Endothelial cell of umbilical vein (primary cell): ENCODE measurements at regions of chr13 and their contacts with region 1.

Region 1: GRCh38 chr13:34044660-34045080 is 226.7 kb downstream of the RFC3 start:
- DNase-seq: peak; percentile 64
- H3K4me3 ChIP-seq: no peak overlapping the region
- H3K27ac ChIP-seq: peak overlapping the region; percentile 41
- H3K4me1 ChIP-seq: peaks cover 12% of the 10 kb centered on the region
- H3K27me3 ChIP-seq: no peaks in the 10 kb centered on the region
- CTCF ChIP-seq: no peak
- POLR2A ChIP-seq: no peak

Region 2: GRCh38 chr13:34257966-34258365 is 213.3 kb after region 1 on chr13:
- CTCF ChIA-PET with region 1: no interaction called
- POLR2A ChIA-PET with region 1: interaction called, 13 read pairs
- dilution Hi-C with region 1: no loop called
- intact Hi-C with region 1: no loop called
- DNase-seq: no peak
- H3K4me3 ChIP-seq: no peak overlapping the region
- H3K27ac ChIP-seq: no peak overlapping the region
- H3K4me1 ChIP-seq: no peaks in the 10 kb centered on the region
- H3K27me3 ChIP-seq: no peaks in the 10 kb centered on the region
- CTCF ChIP-seq: no peak
- POLR2A ChIP-seq: no peak